Heart right ventricle (tissue), 16 donors: ENCODE measurements at regions of chr17 and their contacts with region 1.

Region 1: GRCh38 chr17:79019632-79020584 is 4.1 kb upstream of the C1QTNF1 start:
- DNase-seq: peak; percentile 65 to 79
- ATAC-seq: peak; percentile 9 to 60 (median 38)
- H3K4me3 ChIP-seq: peak overlapping the region in 3 of 10 donors; percentile 2 to 20 (median 4)
- H3K27ac ChIP-seq: peak overlapping the region; percentile 52 to 95 (median 90)
- H3K4me1 ChIP-seq: peaks cover 24 to 57% (median 52%) of the 10 kb centered on the region in 9 donors
- H3K27me3 ChIP-seq: peaks cover 0 to 42% (median 0%) of the 10 kb centered on the region in 7 donors
- CTCF ChIP-seq: peak; percentile 53 to 85 (median 81)

Region 2: GRCh38 chr17:78828470-78829185 is 191.3 kb before region 1 on chr17:
- intact Hi-C with region 1: no loop called
- DNase-seq: no peak
- ATAC-seq: no peak
- H3K4me3 ChIP-seq: no peak overlapping the region
- H3K27ac ChIP-seq: no peak overlapping the region
- H3K4me1 ChIP-seq: peaks cover 0 to 26% (median 0%) of the 10 kb centered on the region in 9 donors
- H3K27me3 ChIP-seq: no peaks in the 10 kb centered on the region
- CTCF ChIP-seq: peak in 1 of 9 donors; percentile 33

Region 3: GRCh38 chr17:79074650-79075445 is 54.9 kb after region 1 on chr17 and contains the start of gene ENGASE:
- intact Hi-C with region 1: loop called in 4 of 10 experiments (anchors 5 to 10 kb)
- DNase-seq: peak; percentile 93 to 97
- ATAC-seq: peak; percentile 96 to 99 (median 98)
- H3K4me3 ChIP-seq: peak within 1 kb of the TSS; percentile 70 to 92 (median 82)
- H3K27ac ChIP-seq: peak within 1 kb of the TSS; percentile 76 to 94 (median 89)
- H3K4me1 ChIP-seq: peaks cover 6 to 29% (median 12%) of the 10 kb centered on the region in 9 donors
- H3K27me3 ChIP-seq: no peaks in the 10 kb centered on the region
- CTCF ChIP-seq: no peak
- total RNA-seq, gene ENGASE: 20.1 to 45.5 (median 26.6) TPM

Region 4: GRCh38 chr17:79082311-79083190 is 62.6 kb after region 1 on chr17:
- intact Hi-C with region 1: loop called in 4 of 10 experiments (anchors 5 to 10 kb)
- DNase-seq: peak; percentile 46 to 52
- ATAC-seq: peak in 7 of 8 donors; percentile 21 to 71 (median 46)
- H3K4me3 ChIP-seq: no peak overlapping the region
- H3K27ac ChIP-seq: no peak overlapping the region
- H3K4me1 ChIP-seq: peaks cover 0 to 21% (median 10%) of the 10 kb centered on the region in 9 donors
- H3K27me3 ChIP-seq: no peaks in the 10 kb centered on the region
- CTCF ChIP-seq: peak; percentile 67 to 88 (median 83)